ENCODE measurements at regions of chr9 and their contacts with region 1.

Region 1: DNA sequence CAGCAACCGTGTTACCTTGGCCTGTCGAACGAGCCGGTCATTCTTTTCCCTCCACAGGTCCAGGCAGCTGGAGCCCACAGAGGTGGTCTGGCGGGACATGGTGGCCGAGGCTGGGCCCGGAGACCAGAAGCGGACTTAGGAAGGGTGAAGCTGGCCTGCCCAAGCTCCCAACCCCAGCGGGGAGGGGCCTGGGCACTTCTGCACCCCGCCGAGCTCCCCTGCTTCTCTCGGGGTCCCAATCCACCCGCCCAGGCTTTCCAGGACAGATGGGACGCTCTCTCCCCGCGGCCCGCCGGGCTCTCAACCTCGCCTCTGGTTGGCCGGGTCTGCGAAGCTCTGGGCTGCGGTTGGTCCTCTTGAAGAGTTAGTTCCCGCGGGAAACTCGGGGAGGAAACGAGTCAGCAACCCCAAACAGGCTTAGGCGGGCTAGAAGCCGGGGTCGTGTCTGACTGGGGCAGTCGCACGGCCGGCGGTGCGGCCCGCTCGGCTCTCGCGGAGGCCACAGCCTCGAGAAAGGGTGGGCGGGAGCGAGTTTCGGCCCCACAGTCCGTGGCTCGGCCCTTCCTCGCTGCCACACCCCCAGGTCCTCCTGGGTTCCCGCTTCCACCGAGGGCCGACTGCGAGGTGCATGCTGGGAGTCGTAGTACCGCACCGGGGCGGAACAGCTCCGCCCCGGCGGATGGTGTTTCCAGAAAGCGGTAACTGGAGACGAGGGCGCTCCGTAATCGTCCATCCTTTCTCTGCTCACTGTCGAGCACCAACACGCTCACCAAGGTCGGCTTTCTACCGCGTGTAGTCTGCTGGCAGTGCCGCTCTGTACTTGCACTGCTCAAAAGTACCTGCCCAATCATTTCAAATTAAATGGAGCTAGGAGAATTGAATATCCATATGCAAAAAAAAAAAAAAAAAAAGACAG is at the start of gene FANCG:
- DNase-seq: peak; percentile 91
- ATAC-seq: peak; percentile 90
- H3K4me3 Mint-ChIP-seq: peak within 1 kb of the TSS; percentile 90
- H3K27ac Mint-ChIP-seq: peak within 1 kb of the TSS; percentile 97
- H3K4me1 Mint-ChIP-seq: peaks cover 21% of the 10 kb centered on the region
- H3K27me3 Mint-ChIP-seq: no peaks in the 10 kb centered on the region
- CTCF ChIP-seq: no peak
- total RNA-seq, gene FANCG: 91.5 to 94.0 TPM

Region 2: DNA sequence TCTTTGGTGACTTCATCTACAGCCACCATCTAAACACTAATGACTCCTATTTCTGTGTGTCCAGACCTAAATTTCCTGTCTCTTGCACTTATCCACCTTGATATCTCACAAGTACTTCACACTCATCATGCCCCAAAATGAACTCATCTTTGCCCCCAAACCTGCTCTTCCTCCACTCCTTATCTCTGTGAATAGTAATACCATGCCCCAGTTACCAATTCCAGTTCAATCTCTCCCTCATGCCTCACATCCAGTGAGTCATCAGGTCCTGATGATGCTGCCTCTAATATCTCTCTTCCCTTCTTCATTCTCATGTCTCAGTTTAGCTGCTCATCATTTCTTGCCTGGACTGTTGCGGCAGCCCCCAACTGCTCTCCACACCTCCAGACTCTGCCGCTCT is 105.0 kb before region 1 on chr9:
- CTCF ChIA-PET with region 1: no interaction called
- POLR2A ChIA-PET with region 1: no interaction called
- intact Hi-C with region 1: no loop called
- DNase-seq: no peak
- ATAC-seq: no peak
- H3K4me3 Mint-ChIP-seq: no peak overlapping the region
- H3K27ac Mint-ChIP-seq: no peak overlapping the region
- H3K4me1 Mint-ChIP-seq: no peaks in the 10 kb centered on the region
- H3K27me3 Mint-ChIP-seq: peaks cover 2% of the 10 kb centered on the region
- CTCF ChIP-seq: no peak

Region 3: GRCh38 chr9:35096035-35096849 is 16.6 kb after region 1 on chr9 and contains the start of gene PIGO:
- CTCF ChIA-PET with region 1: interaction called, 83 read pairs
- POLR2A ChIA-PET with region 1: interaction called, 101 read pairs
- intact Hi-C with region 1: no loop called
- DNase-seq: peak; percentile 93
- ATAC-seq: peak; percentile 92
- H3K4me3 Mint-ChIP-seq: peak within 1 kb of the TSS; percentile 85
- H3K27ac Mint-ChIP-seq: peak within 1 kb of the TSS; percentile 93
- H3K4me1 Mint-ChIP-seq: peaks cover 23% of the 10 kb centered on the region
- H3K27me3 Mint-ChIP-seq: no peaks in the 10 kb centered on the region
- CTCF ChIP-seq: peak; percentile 95
- total RNA-seq, gene PIGO: 19.8 to 21.9 TPM

Region 4: GRCh38 chr9:35102926-35103659 is 23.4 kb after region 1 on chr9 and contains the start of gene STOML2:
- CTCF ChIA-PET with region 1: interaction called, 83 read pairs
- POLR2A ChIA-PET with region 1: interaction called, 101 read pairs
- intact Hi-C with region 1: no loop called
- DNase-seq: peak; percentile 96
- ATAC-seq: peak; percentile 98
- H3K4me3 Mint-ChIP-seq: peak within 1 kb of the TSS; percentile 98
- H3K27ac Mint-ChIP-seq: peak within 1 kb of the TSS; percentile 97
- H3K4me1 Mint-ChIP-seq: peaks cover 22% of the 10 kb centered on the region
- H3K27me3 Mint-ChIP-seq: no peaks in the 10 kb centered on the region
- CTCF ChIP-seq: no peak
- total RNA-seq, gene STOML2: 208 to 211 TPM

Region 5: DNA sequence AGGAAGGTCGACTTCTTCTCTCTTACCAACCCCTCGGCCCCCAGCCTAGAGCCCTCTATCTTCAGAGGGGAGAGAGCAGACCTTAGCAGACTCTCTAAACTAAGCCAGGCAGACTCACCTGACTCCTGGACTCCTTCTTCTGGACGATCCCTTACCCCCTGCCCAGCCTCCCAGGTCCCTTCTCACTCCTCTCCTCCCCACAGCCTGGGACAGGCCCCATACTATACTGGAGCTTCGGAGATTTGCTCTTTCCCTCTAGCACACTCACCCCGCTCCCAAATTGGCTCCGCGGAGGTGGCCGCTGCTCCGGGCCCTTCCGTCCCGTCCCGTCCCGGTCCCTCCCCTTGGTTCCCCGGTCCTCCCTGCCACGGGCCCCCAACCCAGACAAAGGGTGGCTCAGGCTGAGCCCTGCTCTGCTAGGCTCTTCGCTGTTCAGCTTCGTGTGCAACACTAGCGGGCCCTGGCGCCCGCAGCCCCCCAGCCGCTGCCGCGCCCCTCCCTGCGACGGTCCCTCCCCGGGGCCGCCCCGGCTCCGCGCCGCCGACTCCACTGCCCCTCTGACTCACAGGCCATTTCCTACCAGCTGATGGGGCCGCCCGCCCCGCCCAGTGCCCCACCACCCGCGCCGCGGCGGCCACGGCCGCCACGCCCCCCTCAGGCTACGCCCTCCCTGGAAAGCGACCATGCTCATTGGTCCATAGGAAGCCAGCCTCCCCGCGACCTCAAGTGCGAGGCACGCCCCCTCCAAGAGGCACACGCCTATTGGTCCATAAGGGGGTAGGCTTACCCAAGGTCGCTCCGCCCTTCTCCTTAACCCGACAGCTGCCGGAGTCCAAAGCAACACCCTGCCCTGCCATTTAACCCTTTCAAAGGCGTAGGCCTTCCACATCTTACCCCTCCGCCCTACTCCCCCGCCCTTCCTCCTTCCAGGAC is 31.6 kb after region 1 on chr9:
- CTCF ChIA-PET with region 1: interaction called, 5 read pairs
- POLR2A ChIA-PET with region 1: interaction called, 10 read pairs
- intact Hi-C with region 1: no loop called
- DNase-seq: peak; percentile 98
- ATAC-seq: peak; percentile 81
- H3K4me3 Mint-ChIP-seq: peak overlapping the region; percentile 65
- H3K27ac Mint-ChIP-seq: peak overlapping the region; percentile 70
- H3K4me1 Mint-ChIP-seq: peaks cover 43% of the 10 kb centered on the region
- H3K27me3 Mint-ChIP-seq: no peaks in the 10 kb centered on the region
- CTCF ChIP-seq: no peak

Region 6: DNA sequence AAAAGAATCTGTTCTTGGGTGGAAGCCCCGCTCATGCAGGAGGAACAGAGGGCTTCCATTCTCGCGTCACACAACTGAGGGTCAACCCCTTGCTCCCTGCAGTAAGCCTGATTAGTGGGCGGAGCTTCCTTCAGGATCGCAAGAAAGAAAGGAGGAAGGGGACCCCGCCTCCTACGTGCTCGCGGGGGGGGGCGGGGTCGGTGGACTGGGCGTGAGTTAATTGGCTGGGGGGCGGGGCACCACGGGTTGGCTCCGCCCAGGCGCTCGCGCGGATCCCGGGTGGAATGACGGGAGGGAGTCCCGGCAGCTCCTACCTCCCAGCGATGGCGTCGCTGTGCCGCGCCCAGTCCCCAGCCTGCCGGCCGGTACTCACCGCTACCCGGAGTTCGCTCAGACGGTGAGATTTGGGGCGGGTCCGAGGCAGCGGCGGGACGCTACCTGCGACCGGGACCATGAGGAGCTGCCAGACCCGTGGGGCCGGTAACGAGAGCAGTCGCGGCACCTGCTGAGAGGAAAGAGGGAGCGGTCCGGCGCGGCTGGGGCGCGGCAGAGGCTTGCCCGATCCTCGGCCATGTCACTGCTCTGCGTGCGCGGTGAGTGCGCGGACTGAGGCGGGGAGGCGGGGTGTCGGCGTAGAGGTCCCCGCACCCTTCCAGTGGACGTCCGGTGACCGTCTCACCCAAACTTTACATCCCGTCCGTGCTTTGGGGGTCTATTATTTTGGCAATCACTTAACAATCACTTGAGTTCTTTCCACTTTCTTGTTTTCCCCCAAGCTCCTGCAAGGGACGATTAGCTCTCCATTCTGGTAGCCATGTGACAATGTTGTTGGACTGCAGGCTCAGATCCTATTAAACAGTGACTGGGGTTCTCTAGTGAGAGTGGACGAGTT is 82.3 kb after region 1 on chr9 and contains the start of gene UNC13B:
- CTCF ChIA-PET with region 1: no interaction called
- POLR2A ChIA-PET with region 1: no interaction called
- intact Hi-C with region 1: no loop called
- DNase-seq: peak; percentile 79
- ATAC-seq: peak; percentile 92
- H3K4me3 Mint-ChIP-seq: peak within 1 kb of the TSS; percentile 87
- H3K27ac Mint-ChIP-seq: no peak within 1 kb of the TSS
- H3K4me1 Mint-ChIP-seq: peaks cover 17% of the 10 kb centered on the region
- H3K27me3 Mint-ChIP-seq: peaks cover 16% of the 10 kb centered on the region
- CTCF ChIP-seq: no peak
- total RNA-seq, gene UNC13B: 1.3 to 1.9 TPM